WTC11 (cell line): ENCODE measurements at regions of chr22 and their contacts with region 1.

Region 1: GRCh38 chr22:20968281-20968977 is 1.4 kb downstream of the AIFM3 start:
- DNase-seq: no peak
- ATAC-seq: peak; percentile 7; the same call in 1 of the 2 replicates
- H3K4me3 Mint-ChIP-seq: no peak overlapping the region
- H3K27ac Mint-ChIP-seq: no peak overlapping the region
- H3K4me1 Mint-ChIP-seq: peaks cover 16% of the 10 kb centered on the region
- H3K27me3 Mint-ChIP-seq: peaks cover 65% of the 10 kb centered on the region
- CTCF ChIP-seq: no peak

Region 2: DNA sequence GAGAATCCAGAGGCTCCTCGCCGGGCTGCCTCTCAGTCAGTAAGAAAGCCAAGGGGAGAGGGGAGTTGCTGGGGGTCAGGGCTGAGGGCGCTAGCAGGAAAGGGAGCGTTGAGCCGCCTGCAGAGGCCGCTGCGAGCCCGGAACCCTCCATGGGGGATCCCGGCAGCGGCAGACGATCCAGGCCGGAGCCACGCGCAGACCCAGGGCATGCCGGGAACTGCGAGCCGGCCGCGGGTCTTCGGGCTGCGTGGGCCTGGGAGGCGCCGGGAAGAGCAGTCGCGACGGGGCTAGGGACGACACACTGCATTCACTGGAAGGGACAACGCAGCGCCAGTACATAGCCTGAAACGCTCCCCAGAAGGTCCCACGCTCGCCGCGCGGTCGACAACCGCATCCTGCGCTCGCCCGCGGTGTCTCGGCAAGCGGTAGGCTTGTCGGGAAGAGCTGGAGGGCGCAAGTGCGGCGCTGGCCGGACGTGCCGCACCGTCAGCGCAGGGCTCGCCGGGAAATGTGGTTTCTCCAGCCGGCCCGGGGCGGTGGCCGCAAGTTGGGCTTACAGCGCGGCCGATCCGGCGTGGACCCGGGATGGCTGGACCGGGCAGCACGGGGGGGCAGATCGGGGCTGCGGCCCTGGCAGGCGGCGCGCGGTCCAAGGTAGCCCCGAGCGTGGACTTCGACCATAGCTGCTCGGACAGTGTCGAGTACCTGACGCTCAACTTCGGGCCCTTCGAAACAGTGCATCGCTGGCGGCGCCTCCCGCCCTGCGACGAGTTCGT is 13.5 kb after region 1 on chr22 and contains the start of gene LZTR1:
- CTCF ChIA-PET with region 1: interaction called, 13 read pairs
- POLR2A ChIA-PET with region 1: interaction called, 4 read pairs
- DNase-seq: peak; percentile 81
- ATAC-seq: peak; percentile 69
- H3K4me3 Mint-ChIP-seq: peak within 1 kb of the TSS; percentile 96
- H3K27ac Mint-ChIP-seq: peak within 1 kb of the TSS; percentile 85
- H3K4me1 Mint-ChIP-seq: peaks cover 30% of the 10 kb centered on the region
- H3K27me3 Mint-ChIP-seq: peaks cover 32% of the 10 kb centered on the region
- CTCF ChIP-seq: no peak
- total RNA-seq, gene LZTR1: 38.3 to 44.5 TPM (median 40.1 TPM) in 3 replicates